CD8-positive, alpha-beta T cell (primary cell): ENCODE measurements at regions of chr7 and their contacts with region 1.

Region 1: DNA sequence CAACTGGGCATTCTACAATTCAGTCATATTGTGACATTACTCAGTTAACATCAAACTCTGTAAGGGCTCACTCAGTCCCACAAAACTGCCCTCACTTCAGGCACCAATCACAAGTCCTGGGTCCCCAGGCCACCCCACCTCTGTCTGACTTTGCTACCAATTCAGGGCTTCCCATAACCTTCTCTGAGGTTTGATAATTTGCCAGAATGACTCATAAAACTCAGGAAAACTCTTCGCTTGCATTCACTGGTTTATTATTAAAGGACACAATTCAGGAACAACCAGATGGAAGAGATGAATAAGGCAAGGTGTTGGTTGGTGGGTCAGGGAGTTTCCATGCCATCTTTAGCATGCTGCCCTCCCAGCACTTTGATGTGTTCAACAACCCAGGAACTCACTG is 41.3 kb downstream of the AVL9 start:
- DNase-seq: no peak
- ATAC-seq: no peak
- H3K4me3 ChIP-seq: no peak overlapping the region
- H3K4me3 Mint-ChIP-seq: no peak overlapping the region
- H3K27ac ChIP-seq: no peak overlapping the region
- H3K27ac Mint-ChIP-seq: no peak overlapping the region
- H3K4me1 ChIP-seq: peaks cover 4% of the 10 kb centered on the region
- H3K4me1 Mint-ChIP-seq: peaks cover 52% of the 10 kb centered on the region
- H3K27me3 ChIP-seq: no peaks in the 10 kb centered on the region
- H3K27me3 Mint-ChIP-seq: no peaks in the 10 kb centered on the region
- CTCF ChIP-seq: no peak

Region 2: GRCh38 chr7:32495298-32496176 is 41.0 kb before region 1 on chr7 and contains the start of gene AVL9:
- CTCF ChIA-PET with region 1: interaction called, 3 read pairs
- POLR2A ChIA-PET with region 1: interaction called, 3 read pairs
- intact Hi-C with region 1: loop called (anchors 5 kb)
- DNase-seq: peak; percentile 98 to 99 (median 99)
- ATAC-seq: peak; percentile 89
- H3K4me3 ChIP-seq: peak within 1 kb of the TSS; percentile 66 to 87
- H3K4me3 Mint-ChIP-seq: peak within 1 kb of the TSS; percentile 97
- H3K27ac ChIP-seq: peak within 1 kb of the TSS; percentile 95 to 99
- H3K27ac Mint-ChIP-seq: peak within 1 kb of the TSS; percentile 96
- H3K4me1 ChIP-seq: peaks cover 31% of the 10 kb centered on the region
- H3K4me1 Mint-ChIP-seq: peaks cover 42% of the 10 kb centered on the region
- H3K27me3 ChIP-seq: no peaks in the 10 kb centered on the region
- H3K27me3 Mint-ChIP-seq: no peaks in the 10 kb centered on the region
- CTCF ChIP-seq: no peak
- total RNA-seq, gene AVL9: 22.4 to 24.7 TPM